ENCODE measurements at regions of chr19 and their contacts with region 1.

Region 1: DNA sequence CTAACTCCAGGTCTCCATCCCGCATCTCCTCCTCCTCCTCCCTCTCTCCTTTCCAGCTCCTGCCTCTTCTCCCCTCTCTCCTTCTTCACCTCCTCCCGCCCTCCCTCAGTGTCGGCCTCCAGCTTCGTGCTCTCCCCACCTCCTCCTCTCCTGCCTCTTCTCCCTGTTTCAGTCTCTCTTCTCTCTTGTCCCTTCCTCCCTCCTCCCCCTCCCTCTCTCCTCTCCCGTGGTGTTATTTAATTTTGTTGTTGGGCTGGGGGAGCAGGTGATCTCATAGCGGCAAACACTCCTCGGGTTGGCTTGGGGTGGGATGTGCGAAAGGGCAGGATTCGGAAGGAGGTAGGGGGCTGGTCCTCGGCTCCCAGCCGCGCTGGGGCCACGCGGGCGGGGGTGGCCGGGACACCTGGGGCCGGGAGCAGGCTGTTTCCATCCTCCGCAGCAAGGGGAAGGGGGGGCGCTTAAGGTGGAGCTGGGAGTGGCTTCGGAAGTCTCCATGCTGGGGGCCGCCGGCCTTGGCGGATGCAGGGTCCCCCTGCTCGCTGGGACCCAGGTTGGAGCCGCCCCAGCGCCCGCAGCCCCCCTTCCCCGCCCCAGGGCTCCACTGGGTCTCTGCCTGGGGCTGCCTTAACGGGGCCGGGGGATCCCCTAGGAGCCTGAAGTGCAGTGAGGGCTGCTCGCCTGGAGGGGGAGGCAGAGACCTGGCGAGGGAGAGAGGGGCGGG is at the start of gene CA11:
- DNase-seq: peak; percentile 87
- ATAC-seq: peak; percentile 92
- total RNA-seq, gene CA11: 8.4 TPM

Region 2: GRCh38 chr19:48568345-48568886 is 77.7 kb before region 1 on chr19:
- intact Hi-C with region 1: no loop called
- DNase-seq: peak; percentile 93
- ATAC-seq: peak; percentile 97

Region 3: GRCh38 chr19:48674921-48675824 is 29.0 kb after region 1 on chr19:
- intact Hi-C with region 1: loop called (anchors 1 kb)
- DNase-seq: peak; percentile 80
- ATAC-seq: peak; percentile 80

Region 4: DNA sequence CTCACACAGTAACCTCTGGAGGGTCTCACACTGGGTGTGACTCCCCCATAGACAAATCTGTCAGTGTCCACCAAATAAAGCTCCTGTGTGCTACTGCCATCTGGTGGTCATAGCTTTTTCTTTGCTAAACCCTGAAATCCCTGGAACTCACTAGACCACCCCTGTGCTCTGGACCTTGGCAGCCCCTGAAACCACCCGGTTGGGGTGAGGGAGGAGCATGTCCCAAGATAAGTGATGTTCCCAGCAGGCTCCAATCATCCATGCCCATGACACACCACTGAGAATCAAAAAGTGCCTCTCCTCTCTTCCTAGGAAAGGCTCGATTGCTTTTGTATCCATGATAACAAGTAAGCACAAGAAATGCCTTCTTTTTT is 196.6 kb after region 1 on chr19:
- intact Hi-C with region 1: loop called (anchors 5 kb)
- DNase-seq: no peak
- ATAC-seq: peak; percentile 53